Panc1 (cell line): ENCODE measurements at regions of chr15 and their contacts with region 1.

Region 1: DNA sequence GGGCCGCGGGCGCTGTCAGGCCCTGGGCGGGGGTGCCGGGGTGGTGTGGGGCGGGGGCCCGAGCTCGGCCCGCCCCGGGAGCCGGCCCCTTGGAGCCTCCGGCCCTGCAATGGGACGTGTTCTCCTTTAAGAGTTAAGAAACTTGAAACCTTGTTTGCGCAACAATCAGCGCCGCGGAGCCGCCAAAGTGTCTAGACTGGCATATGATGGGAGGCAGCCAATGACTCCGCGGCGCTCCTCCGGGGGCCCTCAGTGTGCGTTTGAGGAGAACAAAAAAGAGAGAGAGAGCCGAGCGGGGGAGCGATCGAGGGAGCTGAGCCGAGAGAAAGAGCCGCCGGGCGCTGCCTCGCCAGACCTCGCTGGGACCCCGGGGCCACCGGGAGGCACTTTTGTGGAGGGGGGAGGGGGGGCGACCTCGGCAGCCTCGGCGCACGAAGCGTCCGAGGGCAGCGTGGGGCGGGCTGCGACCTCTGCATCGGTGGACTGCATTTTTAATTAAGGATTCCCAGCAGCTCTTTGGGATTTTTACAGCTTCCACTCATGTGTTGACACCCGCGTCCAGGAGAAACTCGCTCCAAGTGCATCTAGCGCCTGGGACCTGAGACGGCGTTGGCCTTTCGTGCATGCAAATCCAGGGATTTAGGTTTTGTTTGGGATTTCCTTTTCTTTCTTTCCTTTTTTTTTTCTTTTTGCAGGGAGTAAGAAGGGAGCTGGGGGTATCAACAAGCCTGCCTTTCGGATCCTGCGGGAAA is at the start of gene SMAD6:
- DNase-seq: no peak
- ATAC-seq: peak; percentile 76
- H3K4me3 ChIP-seq: peak within 1 kb of the TSS; percentile 91 to 97
- H3K27ac ChIP-seq: peak within 1 kb of the TSS; percentile 99
- H3K4me1 ChIP-seq: peaks cover 49% of the 10 kb centered on the region
- H3K27me3 ChIP-seq: no peaks in the 10 kb centered on the region
- CTCF ChIP-seq: no peak
- total RNA-seq, gene SMAD6: 45.9 TPM

Region 2: GRCh38 chr15:66072616-66073361 is 629.4 kb before region 1 on chr15:
- CTCF ChIA-PET with region 1: no interaction called
- POLR2A ChIA-PET with region 1: no interaction called
- in situ Hi-C with region 1: no loop called
- intact Hi-C with region 1: no loop called
- DNase-seq: no peak
- ATAC-seq: no peak
- H3K4me3 ChIP-seq: no peak overlapping the region
- H3K27ac ChIP-seq: no peak overlapping the region
- H3K4me1 ChIP-seq: no peaks in the 10 kb centered on the region; the same call in 1 of the 2 replicates
- H3K27me3 ChIP-seq: peaks cover 11% of the 10 kb centered on the region
- CTCF ChIP-seq: no peak

Region 3: DNA sequence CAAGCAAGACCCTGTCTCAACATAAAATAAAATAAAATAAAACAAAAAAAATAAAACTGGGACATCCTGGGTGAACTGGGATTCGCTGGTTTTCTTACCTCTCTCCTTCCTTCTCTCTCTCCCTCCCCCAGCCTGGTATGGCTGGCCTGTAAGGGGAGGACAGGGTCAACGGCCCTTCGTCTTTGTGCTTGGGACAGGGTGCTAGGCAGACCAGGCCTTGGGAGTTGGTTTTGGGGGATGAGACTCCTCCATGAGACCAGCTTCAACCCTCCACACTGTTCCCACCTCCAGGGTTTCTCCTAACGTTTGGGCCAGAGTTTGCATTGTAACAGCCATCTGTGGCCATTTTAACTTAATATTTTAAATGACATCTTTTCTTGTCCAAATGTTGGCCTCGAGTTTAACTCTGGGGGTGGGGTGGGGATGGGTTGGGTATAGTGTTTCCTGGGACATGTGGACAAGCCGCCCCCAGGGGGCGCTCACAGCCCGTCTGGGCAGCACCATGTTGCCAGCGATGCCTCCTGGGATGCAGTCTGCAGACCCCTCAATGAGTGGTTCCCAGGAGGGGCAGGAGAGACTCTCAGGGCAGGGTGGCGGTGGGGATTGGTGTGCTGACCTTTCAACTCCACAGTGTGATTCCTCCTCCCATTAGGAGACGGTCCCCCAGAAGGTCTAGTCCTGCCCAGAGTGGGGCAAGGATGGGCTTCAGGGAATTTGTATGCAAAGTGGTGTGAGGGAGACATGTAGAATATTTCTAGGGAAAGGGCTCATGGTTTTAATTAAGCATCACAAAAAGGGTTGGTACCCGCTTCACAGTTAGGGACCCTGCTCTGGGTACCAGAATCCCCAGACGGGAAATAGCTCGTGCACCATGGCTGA is 98.7 kb before region 1 on chr15:
- CTCF ChIA-PET with region 1: no interaction called
- POLR2A ChIA-PET with region 1: interaction called, 7 read pairs
- in situ Hi-C with region 1: no loop called
- intact Hi-C with region 1: loop called (anchors 5 kb)
- DNase-seq: peak; percentile 27
- ATAC-seq: peak; percentile 87
- H3K4me3 ChIP-seq: no peak overlapping the region
- H3K27ac ChIP-seq: no peak overlapping the region
- H3K4me1 ChIP-seq: no peaks in the 10 kb centered on the region
- H3K27me3 ChIP-seq: no peaks in the 10 kb centered on the region
- CTCF ChIP-seq: peak; percentile 94

Region 4: DNA sequence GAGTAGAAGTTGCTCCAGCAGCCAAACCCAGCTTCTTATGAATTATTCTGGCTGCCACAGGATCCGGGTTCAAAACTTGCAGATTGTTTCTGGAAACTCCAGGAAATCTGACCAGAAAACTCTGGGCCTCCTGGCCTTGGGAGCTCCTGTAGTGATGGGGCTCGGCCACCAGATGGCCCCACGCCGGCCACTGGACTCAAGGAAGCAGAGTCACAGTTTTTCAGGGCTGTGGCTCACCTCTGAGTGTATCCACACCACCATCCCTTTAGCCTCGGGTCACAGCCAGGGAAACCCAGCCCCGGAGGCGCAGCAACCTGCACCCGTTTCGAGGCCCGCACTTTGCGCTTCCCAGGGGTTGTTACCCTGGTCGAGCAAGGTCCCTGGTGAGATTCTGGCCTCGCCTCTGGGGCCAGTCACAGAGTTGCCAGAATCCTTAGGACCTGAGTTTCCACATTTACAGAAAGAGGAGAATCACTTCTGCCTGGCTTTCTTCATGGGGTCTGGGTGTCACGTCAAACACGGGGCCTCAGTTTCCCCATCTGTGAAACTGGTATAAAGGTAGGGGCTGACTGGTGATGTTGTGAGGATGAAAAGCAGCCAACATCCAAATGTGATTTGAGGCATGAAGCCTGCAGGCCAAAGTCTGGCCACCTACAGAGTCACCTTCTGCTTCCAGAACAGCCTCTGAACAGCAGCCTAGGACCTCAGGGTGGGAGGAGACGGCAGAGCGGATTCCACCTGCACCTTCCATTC is 82.9 kb before region 1 on chr15:
- CTCF ChIA-PET with region 1: interaction called, 23 read pairs
- POLR2A ChIA-PET with region 1: no interaction called
- in situ Hi-C with region 1: no loop called
- intact Hi-C with region 1: loop called (anchors 2 kb)
- DNase-seq: peak; percentile 39
- ATAC-seq: peak; percentile 93
- H3K4me3 ChIP-seq: no peak overlapping the region
- H3K27ac ChIP-seq: peak overlapping the region; percentile 36
- H3K4me1 ChIP-seq: peaks cover 45% of the 10 kb centered on the region
- H3K27me3 ChIP-seq: no peaks in the 10 kb centered on the region
- CTCF ChIP-seq: peak; percentile 96

Region 5: GRCh38 chr15:66730168-66731021 is 28.2 kb after region 1 on chr15:
- CTCF ChIA-PET with region 1: interaction called, 7 read pairs
- POLR2A ChIA-PET with region 1: interaction called, 18 read pairs
- in situ Hi-C with region 1: no loop called
- intact Hi-C with region 1: no loop called
- DNase-seq: no peak
- ATAC-seq: peak; percentile 41
- H3K4me3 ChIP-seq: no peak overlapping the region
- H3K27ac ChIP-seq: peak overlapping the region; percentile 54
- H3K4me1 ChIP-seq: peaks cover 53% of the 10 kb centered on the region
- H3K27me3 ChIP-seq: no peaks in the 10 kb centered on the region
- CTCF ChIP-seq: no peak

Region 6: DNA sequence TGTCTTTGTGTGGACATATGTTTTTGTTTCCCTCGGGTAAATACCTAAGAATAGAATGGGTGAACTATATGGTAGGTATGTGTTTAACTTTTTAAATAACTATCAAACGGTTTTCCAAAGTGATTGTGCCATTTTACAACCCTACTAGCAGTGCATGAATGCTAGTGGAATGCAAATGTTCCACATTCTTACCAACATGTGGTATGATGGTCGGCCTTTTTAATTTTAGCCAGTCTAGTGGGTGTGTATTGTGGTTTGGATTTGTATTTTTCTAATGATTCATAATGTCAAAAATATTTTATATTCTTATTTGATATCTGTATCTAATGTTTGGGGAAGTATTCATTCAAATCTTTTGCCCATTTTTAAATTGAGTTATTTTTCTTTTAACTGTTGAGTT is 295.0 kb after region 1 on chr15:
- CTCF ChIA-PET with region 1: no interaction called
- POLR2A ChIA-PET with region 1: no interaction called
- in situ Hi-C with region 1: no loop called
- intact Hi-C with region 1: no loop called
- DNase-seq: no peak
- ATAC-seq: 0 out of 2 replicates have a peak, but pooled peaks have one; percentile 12
- H3K4me3 ChIP-seq: no peak overlapping the region
- H3K27ac ChIP-seq: no peak overlapping the region
- H3K4me1 ChIP-seq: peaks cover 6% of the 10 kb centered on the region; the same call in 1 of the 2 replicates
- H3K27me3 ChIP-seq: no peaks in the 10 kb centered on the region
- CTCF ChIP-seq: no peak